HepG2 (cell line): ENCODE measurements at regions of chr1 and their contacts with region 1.

Region 1: DNA sequence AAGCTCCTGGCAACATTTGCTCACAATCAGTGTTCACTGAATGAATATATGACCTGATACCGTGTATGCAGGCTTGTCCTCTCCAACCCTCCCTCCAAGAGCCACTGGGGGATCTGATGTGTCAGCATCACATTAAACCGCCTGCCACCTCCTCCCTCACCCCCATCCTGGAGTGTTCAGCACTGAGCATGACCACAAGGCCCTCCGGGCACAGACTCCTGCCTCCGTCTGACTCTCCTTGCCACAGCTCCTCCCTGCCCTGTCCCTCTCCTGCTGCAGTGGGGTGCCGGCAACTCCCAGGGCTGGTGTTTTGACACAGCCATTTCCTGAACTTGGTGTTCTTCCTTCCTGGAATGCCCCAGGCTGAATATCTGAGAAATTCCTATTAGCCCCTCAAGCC is 136.7 kb downstream of the FCRL5 start:
- DNase-seq: no peak
- ATAC-seq: no peak
- H3K4me3 ChIP-seq: no peak overlapping the region
- H3K27ac ChIP-seq: no peak overlapping the region
- H3K4me1 ChIP-seq: no peaks in the 10 kb centered on the region
- H3K27me3 ChIP-seq: peaks cover 0 to 3% of the 10 kb centered on the region in 2 experiments; a peak in 1 of 5 replicates
- CTCF ChIP-seq: no peak
- EP300 ChIP-seq: no peak
- POLR2A ChIP-seq: no peak
- RAD21 ChIP-seq: no peak

Region 2: GRCh38 chr1:155893389-155894142 is 1522.1 kb before region 1 on chr1:
- CTCF ChIA-PET with region 1: no interaction called
- POLR2A ChIA-PET with region 1: no interaction called
- in situ Hi-C with region 1: no loop called
- intact Hi-C with region 1: loop called (anchors 10 kb)
- DNase-seq: peak; percentile 85
- ATAC-seq: peak; percentile 85
- H3K4me3 ChIP-seq: no peak overlapping the region
- H3K27ac ChIP-seq: peak overlapping the region; percentile 49
- H3K4me1 ChIP-seq: peaks cover 33% of the 10 kb centered on the region
- H3K27me3 ChIP-seq: no peaks in the 10 kb centered on the region
- CTCF ChIP-seq: no peak
- EP300 ChIP-seq: peak in 1 of 2 experiments; percentile 42; a peak in 1 of 4 replicates
- POLR2A ChIP-seq: peak in 1 of 2 experiments; percentile 25; a peak in 1 of 4 replicates
- RAD21 ChIP-seq: no peak